SK-N-SH (cell line): ENCODE measurements at regions of chr9 and their contacts with region 1.

Region 1: DNA sequence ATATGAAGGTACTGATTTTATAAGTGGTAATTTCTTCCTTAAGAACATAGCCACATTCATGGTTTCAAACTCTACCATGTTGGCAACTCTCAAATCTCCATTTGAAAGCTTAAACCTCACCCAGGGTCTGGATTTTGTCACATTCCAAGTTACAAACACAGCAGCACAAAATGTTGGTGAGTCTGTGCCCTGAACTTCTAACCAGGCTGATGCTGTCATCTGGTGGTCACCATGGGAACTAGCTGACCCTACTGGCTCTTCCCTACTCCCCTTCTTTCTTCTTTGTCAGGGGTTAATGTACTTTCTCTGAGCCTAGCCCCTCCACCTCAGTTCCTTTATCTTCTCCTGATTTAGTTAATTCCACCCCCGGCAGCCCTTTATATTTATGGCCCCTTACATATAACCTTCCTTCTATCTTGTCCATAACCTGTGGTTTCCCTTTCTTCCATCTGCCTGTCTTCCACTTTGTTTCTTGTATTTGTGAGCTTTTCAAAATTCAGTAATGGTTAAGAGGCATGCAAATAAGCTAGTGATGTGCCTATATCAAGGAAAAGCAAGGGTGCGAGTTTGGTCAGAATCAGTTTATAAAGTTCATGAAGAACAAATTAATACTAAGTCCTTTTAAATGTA is 35.9 kb downstream of the TGFBR1 start:
- DNase-seq: peak; percentile 46
- H3K4me3 ChIP-seq: no peak overlapping the region
- H3K27ac ChIP-seq: no peak overlapping the region
- H3K4me1 ChIP-seq: no peaks in the 10 kb centered on the region; a peak in 1 of 4 replicates
- H3K27me3 ChIP-seq: no peaks in the 10 kb centered on the region
- CTCF ChIP-seq: peak; percentile 88
- EP300 ChIP-seq: no peak
- RAD21 ChIP-seq: peak; percentile 90

Region 2: DNA sequence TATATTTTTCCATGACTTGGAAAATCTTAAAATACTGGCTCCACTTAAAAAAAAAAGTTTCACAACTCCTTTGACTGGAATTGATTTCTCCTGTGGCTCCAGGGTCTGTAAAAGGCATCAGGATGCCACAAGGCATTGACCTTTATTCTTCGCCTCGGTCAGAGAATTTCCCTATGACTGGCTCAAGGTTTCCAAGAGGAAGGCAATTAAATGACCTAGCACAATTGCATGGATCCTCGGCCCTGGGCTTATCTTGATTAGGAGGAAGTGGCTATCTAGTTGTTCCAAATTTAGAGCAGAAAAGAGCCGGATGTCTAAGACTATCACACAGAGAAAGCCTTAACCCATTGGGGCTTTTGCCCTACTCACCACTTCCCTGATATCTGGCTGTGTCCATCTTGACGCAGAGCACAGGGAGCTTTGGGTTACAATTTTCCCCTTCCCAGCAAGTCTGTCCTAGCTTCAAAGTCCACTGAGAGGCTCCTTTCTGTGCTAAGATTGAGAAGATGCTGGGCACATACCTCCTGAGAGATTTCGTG is 254.0 kb before region 1 on chr9:
- CTCF ChIA-PET with region 1: no interaction called
- POLR2A ChIA-PET with region 1: no interaction called
- DNase-seq: no peak
- H3K4me3 ChIP-seq: no peak overlapping the region
- H3K27ac ChIP-seq: peak overlapping the region in 1 of 2 experiments; percentile 34; a peak in 2 of 4 replicates
- H3K4me1 ChIP-seq: no peaks in the 10 kb centered on the region; a peak in 1 of 4 replicates
- H3K27me3 ChIP-seq: no peaks in the 10 kb centered on the region
- CTCF ChIP-seq: no peak
- EP300 ChIP-seq: no peak
- RAD21 ChIP-seq: no peak

Region 3: DNA sequence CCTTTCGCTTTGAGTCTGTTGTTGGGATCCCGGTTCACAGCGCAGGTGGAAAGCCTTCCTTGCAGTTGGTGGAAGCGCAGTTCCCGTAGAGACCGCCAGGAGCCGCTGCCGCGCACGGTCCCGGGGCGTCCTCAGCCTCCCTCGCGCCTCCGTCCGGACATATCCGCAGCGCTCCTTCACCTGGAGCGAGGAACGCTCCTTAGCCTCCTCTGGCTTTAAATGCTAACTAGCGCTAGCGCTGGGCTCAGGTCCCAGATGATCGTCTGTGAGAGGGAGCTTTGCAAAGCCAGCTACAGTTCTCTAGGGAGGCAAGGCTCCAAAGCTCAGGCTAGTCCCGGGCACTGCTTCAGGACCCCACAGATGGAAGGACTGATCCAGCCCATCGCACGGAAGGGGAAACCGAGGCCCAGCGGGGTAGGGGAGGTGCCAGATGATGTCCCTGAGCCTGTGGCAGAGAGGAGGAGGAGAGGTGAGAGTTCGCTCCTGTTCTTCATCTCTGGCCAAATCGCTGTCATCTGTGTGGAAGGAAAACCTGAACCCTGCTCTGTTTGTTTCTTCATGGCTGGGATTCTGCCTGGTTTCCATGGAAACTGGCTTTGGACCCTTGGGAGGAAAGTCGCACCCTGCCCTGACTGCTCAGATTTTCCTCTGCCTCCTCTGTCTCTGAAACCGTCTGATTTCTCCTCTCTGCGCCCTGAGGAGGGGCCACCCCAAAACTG is 165.6 kb before region 1 on chr9:
- CTCF ChIA-PET with region 1: interaction called, 28 read pairs
- POLR2A ChIA-PET with region 1: no interaction called
- DNase-seq: peak; percentile 89
- H3K4me3 ChIP-seq: peak overlapping the region; percentile 31 to 32
- H3K27ac ChIP-seq: no peak overlapping the region
- H3K4me1 ChIP-seq: peaks cover 5 to 9% of the 10 kb centered on the region in 2 experiments; a peak in 1 of 4 replicates
- H3K27me3 ChIP-seq: no peaks in the 10 kb centered on the region
- CTCF ChIP-seq: peak; percentile 94
- EP300 ChIP-seq: no peak
- RAD21 ChIP-seq: peak; percentile 80

Region 4: GRCh38 chr9:99004717-99005460 is 135.9 kb before region 1 on chr9:
- CTCF ChIA-PET with region 1: interaction called, 131 read pairs
- POLR2A ChIA-PET with region 1: no interaction called
- DNase-seq: no peak
- H3K4me3 ChIP-seq: no peak overlapping the region
- H3K27ac ChIP-seq: no peak overlapping the region
- H3K4me1 ChIP-seq: no peaks in the 10 kb centered on the region
- H3K27me3 ChIP-seq: no peaks in the 10 kb centered on the region
- CTCF ChIP-seq: no peak
- EP300 ChIP-seq: no peak
- RAD21 ChIP-seq: no peak